Calu3 (cell line): ENCODE measurements at regions of chr6 and their contacts with region 1.

Region 1: GRCh38 chr6:19836799-19837510 is at the start of gene ID4:
- DNase-seq: peak; percentile 61
- H3K4me3 Mint-ChIP-seq: peak within 1 kb of the TSS; percentile 74
- H3K27ac Mint-ChIP-seq: peak within 1 kb of the TSS; percentile 86
- H3K4me1 Mint-ChIP-seq: peaks cover 26% of the 10 kb centered on the region
- H3K27me3 Mint-ChIP-seq: no peaks in the 10 kb centered on the region
- CTCF ChIP-seq: no peak
- total RNA-seq, gene ID4: 1.7 and 1.8 TPM in 2 replicates

Region 2: DNA sequence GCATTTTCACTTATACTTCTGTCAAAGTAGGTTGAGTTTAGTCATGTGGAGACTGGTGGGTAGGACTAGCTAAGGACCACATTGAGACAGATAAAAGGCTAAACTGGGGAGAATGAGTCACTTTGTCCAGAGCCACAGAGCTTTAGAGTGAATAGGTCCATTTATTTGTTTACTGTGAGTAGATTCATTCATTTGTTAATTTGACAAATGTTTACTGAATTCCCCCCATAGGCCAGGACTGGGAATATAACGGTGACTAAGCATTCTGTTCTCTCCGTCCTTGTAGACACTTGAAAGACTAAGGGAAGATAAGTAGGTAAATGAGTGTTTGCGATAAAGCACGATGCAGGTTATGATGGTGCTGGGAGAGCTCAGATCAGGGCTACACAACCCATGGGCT is 699.5 kb before region 1 on chr6:
- CTCF ChIA-PET with region 1: no interaction called
- intact Hi-C with region 1: loop called (anchors 10 kb)
- DNase-seq: no peak
- H3K4me3 Mint-ChIP-seq: no peak overlapping the region
- H3K27ac Mint-ChIP-seq: no peak overlapping the region
- H3K4me1 Mint-ChIP-seq: no peaks in the 10 kb centered on the region
- H3K27me3 Mint-ChIP-seq: no peaks in the 10 kb centered on the region
- CTCF ChIP-seq: no peak

Region 3: GRCh38 chr6:19866985-19867627 is 30.2 kb after region 1 on chr6:
- CTCF ChIA-PET with region 1: no interaction called
- intact Hi-C with region 1: loop called (anchors 2 kb)
- DNase-seq: peak; percentile 51
- H3K4me3 Mint-ChIP-seq: no peak overlapping the region
- H3K27ac Mint-ChIP-seq: peak overlapping the region; percentile 31
- H3K4me1 Mint-ChIP-seq: peaks cover 32% of the 10 kb centered on the region
- H3K27me3 Mint-ChIP-seq: no peaks in the 10 kb centered on the region
- CTCF ChIP-seq: no peak